ENCODE measurements at regions of chr1 and their contacts with region 1.

Region 1: DNA sequence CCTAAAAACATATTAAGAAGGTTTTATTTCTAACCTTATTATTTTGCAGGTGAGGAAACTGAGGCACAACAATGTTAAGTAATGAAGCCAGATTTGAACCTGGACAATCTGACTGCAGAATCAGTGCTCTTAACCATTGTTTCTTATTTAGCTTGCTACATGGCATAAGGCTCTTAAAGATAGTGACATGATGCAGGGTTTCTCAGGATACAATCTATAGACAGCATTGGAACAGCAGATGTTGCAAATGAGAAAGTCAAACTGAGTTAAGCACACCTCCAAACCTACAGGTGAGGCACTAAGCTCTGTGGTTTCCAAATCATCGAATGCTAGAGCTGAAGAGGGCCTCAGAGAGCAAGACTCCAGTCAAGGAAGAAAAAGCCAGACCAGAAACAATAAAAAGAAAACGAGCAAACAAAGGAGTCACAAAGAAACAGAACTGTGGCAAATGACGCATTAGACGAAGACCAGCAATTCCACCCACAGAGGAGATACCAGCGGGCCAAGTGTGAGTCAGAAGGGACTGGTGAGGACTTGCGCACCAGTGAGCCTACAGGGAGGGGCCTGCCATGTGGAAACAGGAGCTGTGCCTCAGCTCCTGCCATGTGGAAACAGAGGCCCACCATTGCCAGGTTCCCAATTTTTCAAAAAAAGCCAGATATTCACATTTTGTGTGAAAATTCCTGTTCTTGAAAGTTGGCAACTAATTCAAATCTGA is 14.4 kb downstream of the CD58 start:
- DNase-seq: peak; percentile 67
- H3K4me3 Mint-ChIP-seq: peak overlapping the region; percentile 9
- H3K27ac Mint-ChIP-seq: peak overlapping the region; percentile 77
- H3K4me1 Mint-ChIP-seq: peaks cover 86% of the 10 kb centered on the region
- H3K27me3 Mint-ChIP-seq: no peaks in the 10 kb centered on the region

Region 2: GRCh38 chr1:116372587-116373444 is 183.6 kb before region 1 on chr1 and contains the start of gene ATP1A1:
- intact Hi-C with region 1: loop called (anchors 1 kb)
- DNase-seq: peak; percentile 95
- H3K4me3 Mint-ChIP-seq: peak within 1 kb of the TSS; percentile 95
- H3K27ac Mint-ChIP-seq: peak within 1 kb of the TSS; percentile 90
- H3K4me1 Mint-ChIP-seq: peaks cover 38% of the 10 kb centered on the region
- H3K27me3 Mint-ChIP-seq: peaks cover 12% of the 10 kb centered on the region
- total RNA-seq, gene ATP1A1: 238 and 240 TPM in 2 replicates

Region 3: DNA sequence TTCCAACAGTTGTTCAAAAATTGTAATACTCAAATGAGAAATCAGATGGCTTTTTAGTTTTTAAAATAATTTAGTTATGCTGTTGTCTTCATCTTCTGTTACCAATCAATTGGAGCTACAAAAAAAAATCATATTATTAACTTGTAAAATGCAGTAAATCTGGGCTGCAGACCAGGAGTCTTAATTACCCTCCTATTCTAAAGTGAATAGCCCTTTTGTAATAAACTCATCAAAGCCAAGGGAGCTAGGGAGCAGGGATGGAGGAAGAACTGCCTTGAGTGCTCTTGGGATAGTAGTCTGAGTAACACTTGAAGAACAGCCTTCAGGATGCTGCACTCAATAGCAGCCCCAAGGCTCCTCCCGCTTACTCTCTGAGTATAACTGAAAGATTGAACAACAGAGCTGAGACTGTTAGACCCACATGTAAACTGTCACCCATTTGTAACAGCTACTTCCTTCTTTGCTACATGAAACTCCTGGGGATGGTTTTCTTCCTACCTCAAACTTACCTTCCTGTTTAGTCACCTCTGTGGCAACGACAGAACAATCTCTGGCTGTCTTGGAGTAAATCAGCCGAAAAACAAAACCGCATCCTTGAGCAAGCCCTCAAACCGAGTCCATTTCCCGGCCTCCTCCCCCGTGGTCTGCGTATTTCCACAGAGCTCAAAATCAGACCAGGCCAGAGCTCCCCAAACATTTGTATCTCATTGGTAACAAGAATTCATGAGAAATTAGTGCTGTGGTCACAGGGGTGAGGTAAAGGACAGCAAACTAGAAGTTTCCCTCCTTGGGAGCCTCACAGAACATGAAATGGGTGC is 41.5 kb before region 1 on chr1:
- intact Hi-C with region 1: loop called (anchors 1 kb)
- DNase-seq: peak; percentile 74
- H3K4me3 Mint-ChIP-seq: peak overlapping the region; percentile 75
- H3K27ac Mint-ChIP-seq: peak overlapping the region; percentile 97
- H3K4me1 Mint-ChIP-seq: peaks cover 80% of the 10 kb centered on the region
- H3K27me3 Mint-ChIP-seq: no peaks in the 10 kb centered on the region

Region 4: DNA sequence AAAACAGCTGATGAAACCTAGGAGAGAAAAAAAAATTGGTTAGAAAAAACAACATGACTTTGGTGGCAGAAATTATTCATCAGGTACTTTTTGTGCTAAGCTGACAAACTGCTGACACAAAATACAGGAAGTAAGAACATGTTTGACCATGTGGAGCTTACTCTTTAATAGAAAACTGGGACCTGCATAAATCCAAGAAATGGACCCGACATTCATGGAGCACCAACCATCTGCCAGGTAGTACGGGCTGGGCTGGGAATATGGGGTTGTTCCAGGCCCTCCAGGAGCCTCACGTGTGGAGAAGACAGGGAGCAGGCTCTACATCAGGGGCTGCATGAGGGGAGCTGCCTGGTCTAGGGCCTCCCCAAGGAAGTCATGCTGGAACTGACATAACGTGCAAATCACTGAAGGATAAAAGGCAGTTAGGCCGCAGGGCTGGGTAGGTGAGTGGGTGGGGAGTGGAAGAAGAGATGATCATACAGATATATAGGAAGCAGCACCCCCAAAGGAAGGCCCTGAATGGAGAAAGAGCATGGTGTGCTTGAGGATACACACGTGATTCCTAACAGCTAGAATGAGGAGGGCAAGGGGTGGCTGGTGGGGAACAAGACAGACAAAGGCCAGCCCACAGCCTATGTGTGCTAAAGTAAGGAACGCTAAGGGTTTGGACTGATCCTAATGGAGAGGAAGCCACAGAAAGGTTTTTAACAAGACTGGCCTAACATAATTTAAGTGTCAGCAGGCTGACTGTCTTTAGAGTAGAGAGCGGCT is 11.7 kb before region 1 on chr1:
- intact Hi-C with region 1: loop called (anchors 1 kb)
- DNase-seq: no peak
- H3K4me3 Mint-ChIP-seq: peak overlapping the region; percentile 83
- H3K27ac Mint-ChIP-seq: peak overlapping the region; percentile 99
- H3K4me1 Mint-ChIP-seq: peaks cover 83% of the 10 kb centered on the region
- H3K27me3 Mint-ChIP-seq: no peaks in the 10 kb centered on the region

Region 5: GRCh38 chr1:117367047-117368018 is 810.9 kb after region 1 on chr1 and contains the start of gene MAN1A2:
- intact Hi-C with region 1: loop called (anchors 1 kb)
- DNase-seq: peak; percentile 74
- H3K4me3 Mint-ChIP-seq: peak within 1 kb of the TSS; percentile 97
- H3K27ac Mint-ChIP-seq: peak within 1 kb of the TSS; percentile 88
- H3K4me1 Mint-ChIP-seq: peaks cover 60% of the 10 kb centered on the region
- H3K27me3 Mint-ChIP-seq: no peaks in the 10 kb centered on the region
- total RNA-seq, gene MAN1A2: 30.1 and 32.5 TPM in 2 replicates

Measured in activated T-helper 1 cell treated with anti-CD3 and anti-CD28 coated beads, Interleukin-12 subunit alpha, Interleukin-12 subunit beta, Interleukin-2, Interleukin-4 antibody, amounts not matched to agents 30 ng/mL and 10 ng/mL and 1 ng/mL, durations not matched to agents 14 hours and 24 hours and 36 hours (primary cell).